Activated B cell treated with CpG ODN at 0.5 μM for 24 hours (primary cell): ENCODE measurements at regions of chr5 and their contacts with region 1.

Region 1: DNA sequence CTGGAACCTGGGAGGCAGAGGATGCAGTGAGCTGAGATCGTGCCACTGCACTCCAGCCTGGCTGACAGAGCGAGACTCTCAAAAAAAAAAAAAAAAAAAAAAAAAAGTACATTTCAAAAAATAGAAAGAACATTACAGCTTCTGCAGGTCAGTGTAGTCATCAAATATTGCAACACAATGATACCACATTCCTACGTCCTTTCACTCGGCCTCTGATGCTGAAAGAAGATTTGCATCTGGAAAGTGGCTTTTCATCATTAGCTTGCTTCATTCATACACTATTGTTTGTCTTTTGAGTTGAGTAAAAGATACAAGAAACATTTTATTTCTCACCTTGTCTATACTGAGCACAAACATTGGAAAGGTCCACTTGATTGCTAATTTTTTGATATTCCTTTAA is 59.6 kb upstream of the CPLANE1 start:
- DNase-seq: no peak
- ATAC-seq: no peak
- H3K4me3 Mint-ChIP-seq: no peak overlapping the region
- H3K27ac Mint-ChIP-seq: no peak overlapping the region
- H3K4me1 Mint-ChIP-seq: no peaks in the 10 kb centered on the region
- H3K27me3 Mint-ChIP-seq: no peaks in the 10 kb centered on the region
- CTCF ChIP-seq: no peak

Region 2: GRCh38 chr5:37323607-37324006 is 14.8 kb after region 1 on chr5:
- CTCF ChIA-PET with region 1: no interaction called
- POLR2A ChIA-PET with region 1: no interaction called
- intact Hi-C with region 1: loop called (anchors 2 kb)
- DNase-seq: no peak
- ATAC-seq: no peak
- H3K4me3 Mint-ChIP-seq: no peak overlapping the region
- H3K27ac Mint-ChIP-seq: no peak overlapping the region
- H3K4me1 Mint-ChIP-seq: no peaks in the 10 kb centered on the region
- H3K27me3 Mint-ChIP-seq: no peaks in the 10 kb centered on the region
- CTCF ChIP-seq: no peak